ENCODE measurements at regions of chr15 and their contacts with region 1.

Region 1: GRCh38 chr15:32956006-32956405 is 238.2 kb downstream of the GREM1 start:
- DNase-seq: no peak
- ATAC-seq: peak; percentile 62; the same call in 2 of the 3 replicates
- H3K4me3 ChIP-seq: no peak overlapping the region
- H3K27ac ChIP-seq: no peak overlapping the region
- H3K4me1 ChIP-seq: no peaks in the 10 kb centered on the region
- H3K27me3 ChIP-seq: no peaks in the 10 kb centered on the region
- CTCF ChIP-seq: peak; percentile 49 to 62 (median 58); a peak in 5 of 6 replicates
- EP300 ChIP-seq: no peak
- POLR2A ChIP-seq: no peak
- RAD21 ChIP-seq: peak; percentile 65

Region 2: DNA sequence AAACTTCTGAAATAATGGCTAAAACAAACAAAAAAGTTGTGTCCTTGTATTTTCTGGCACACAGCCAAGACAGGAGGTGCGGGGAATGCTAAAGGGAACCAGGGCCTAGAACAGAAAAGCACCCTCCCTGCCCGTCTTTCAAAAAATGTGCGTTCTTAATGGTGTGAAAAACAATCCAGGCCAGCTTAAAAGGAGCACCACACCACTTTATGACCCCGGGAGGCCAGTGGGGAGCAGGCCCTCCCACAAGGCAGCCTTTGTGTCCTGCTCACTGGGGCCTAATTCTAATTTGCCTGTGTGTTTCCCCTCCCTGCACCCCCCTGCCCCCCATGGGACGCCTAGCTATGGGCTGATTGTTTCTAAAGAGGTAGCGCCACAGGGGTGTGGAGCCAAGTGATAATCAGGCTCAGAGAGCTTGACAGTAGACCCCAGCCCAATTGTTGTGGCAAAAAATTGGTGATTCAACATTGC is 56.8 kb before region 1 on chr15:
- CTCF ChIA-PET with region 1: interaction called, 11 read pairs
- POLR2A ChIA-PET with region 1: no interaction called
- RAD21 ChIA-PET with region 1: interaction called, 9 read pairs
- SMC1A ChIA-PET with region 1: interaction called, 4 read pairs
- in situ Hi-C with region 1: no loop called
- intact Hi-C with region 1: no loop called
- DNase-seq: no peak
- ATAC-seq: peak; percentile 92
- H3K4me3 ChIP-seq: no peak overlapping the region
- H3K27ac ChIP-seq: no peak overlapping the region
- H3K4me1 ChIP-seq: no peaks in the 10 kb centered on the region; the same call in 1 of the 2 replicates
- H3K27me3 ChIP-seq: no peaks in the 10 kb centered on the region
- CTCF ChIP-seq: no peak
- EP300 ChIP-seq: no peak
- POLR2A ChIP-seq: no peak
- RAD21 ChIP-seq: no peak

Region 3: GRCh38 chr15:32936283-32936918 is 19.6 kb before region 1 on chr15:
- CTCF ChIA-PET with region 1: interaction called, 12 read pairs
- POLR2A ChIA-PET with region 1: no interaction called
- RAD21 ChIA-PET with region 1: interaction called, 3 read pairs
- SMC1A ChIA-PET with region 1: interaction called, 9 read pairs
- in situ Hi-C with region 1: no loop called
- intact Hi-C with region 1: no loop called
- DNase-seq: no peak
- ATAC-seq: peak; percentile 56; the same call in 2 of the 3 replicates
- H3K4me3 ChIP-seq: no peak overlapping the region
- H3K27ac ChIP-seq: no peak overlapping the region
- H3K4me1 ChIP-seq: no peaks in the 10 kb centered on the region
- H3K27me3 ChIP-seq: peaks cover 0 to 2% of the 10 kb centered on the region in 2 experiments; a peak in 1 of 4 replicates
- CTCF ChIP-seq: peak; percentile 53 to 67 (median 66); a peak in 5 of 6 replicates
- EP300 ChIP-seq: no peak
- POLR2A ChIP-seq: no peak
- RAD21 ChIP-seq: peak; percentile 53

Region 4: GRCh38 chr15:33067456-33067855 is 111.5 kb after region 1 on chr15:
- CTCF ChIA-PET with region 1: no interaction called
- POLR2A ChIA-PET with region 1: no interaction called
- RAD21 ChIA-PET with region 1: no interaction called
- SMC1A ChIA-PET with region 1: no interaction called
- in situ Hi-C with region 1: no loop called
- intact Hi-C with region 1: no loop called
- DNase-seq: no peak
- ATAC-seq: no peak
- H3K4me3 ChIP-seq: no peak overlapping the region
- H3K27ac ChIP-seq: no peak overlapping the region
- H3K4me1 ChIP-seq: no peaks in the 10 kb centered on the region
- H3K27me3 ChIP-seq: peaks cover 3 to 6% of the 10 kb centered on the region in 2 experiments; a peak in 3 of 4 replicates
- CTCF ChIP-seq: no peak
- EP300 ChIP-seq: no peak
- POLR2A ChIP-seq: no peak
- RAD21 ChIP-seq: no peak